ENCODE measurements at regions of chr12 and their contacts with region 1.

Region 1: DNA sequence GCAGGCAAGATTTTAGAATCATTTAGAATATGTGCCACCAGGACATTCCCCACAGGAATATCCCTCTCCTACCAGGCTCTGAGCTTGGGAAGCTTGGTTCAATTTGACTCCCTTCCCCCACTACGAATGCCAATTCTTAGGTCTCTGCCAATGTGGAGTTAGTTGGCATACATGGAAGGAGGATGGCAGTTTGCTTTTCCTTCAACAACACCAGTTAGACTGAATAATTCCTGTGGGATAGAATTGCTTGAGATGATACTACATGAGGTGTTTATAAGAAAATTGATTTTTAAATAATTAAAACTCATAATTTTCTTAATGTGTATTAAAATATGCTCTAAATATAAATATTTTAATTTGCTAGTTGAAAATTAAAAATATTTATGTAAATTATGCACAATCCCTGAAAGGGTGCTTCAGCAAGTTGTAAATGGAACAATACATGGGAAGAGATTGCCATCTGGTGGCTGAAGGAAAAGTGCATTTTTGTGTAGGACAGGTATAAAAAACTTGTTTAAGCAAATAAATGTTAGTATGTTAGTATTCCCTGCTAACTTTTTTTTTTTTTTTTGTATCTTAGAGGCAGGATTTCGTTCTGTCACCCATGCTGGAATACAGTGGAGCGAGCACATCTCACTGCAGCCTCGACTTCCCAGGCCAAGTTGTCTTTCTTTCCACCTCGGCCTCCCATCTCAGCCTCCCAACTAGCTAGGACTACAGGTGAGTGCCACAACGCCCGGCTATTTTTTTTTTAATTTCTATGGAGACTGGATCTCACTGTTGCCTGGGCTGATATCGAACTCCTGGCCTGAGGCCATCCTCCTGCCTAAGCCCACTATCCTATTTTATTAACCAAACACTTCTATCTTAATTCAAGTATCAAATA is 25.8 kb upstream of the STRAP start:
- DNase-seq: peak in 1 of 2 donors; percentile 15
- ATAC-seq: peak; percentile 45 to 64
- H3K4me3 ChIP-seq: no peak overlapping the region
- H3K27ac ChIP-seq: peak overlapping the region in 3 of 4 donors; percentile 8 to 19 (median 15)
- H3K4me1 ChIP-seq: peaks cover 0 to 2% of the 10 kb centered on the region in 2 donors
- H3K27me3 ChIP-seq: no peaks in the 10 kb centered on the region
- CTCF ChIP-seq: peak; percentile 78 to 86 (median 82)
- POLR2A ChIP-seq: no peak

Region 2: DNA sequence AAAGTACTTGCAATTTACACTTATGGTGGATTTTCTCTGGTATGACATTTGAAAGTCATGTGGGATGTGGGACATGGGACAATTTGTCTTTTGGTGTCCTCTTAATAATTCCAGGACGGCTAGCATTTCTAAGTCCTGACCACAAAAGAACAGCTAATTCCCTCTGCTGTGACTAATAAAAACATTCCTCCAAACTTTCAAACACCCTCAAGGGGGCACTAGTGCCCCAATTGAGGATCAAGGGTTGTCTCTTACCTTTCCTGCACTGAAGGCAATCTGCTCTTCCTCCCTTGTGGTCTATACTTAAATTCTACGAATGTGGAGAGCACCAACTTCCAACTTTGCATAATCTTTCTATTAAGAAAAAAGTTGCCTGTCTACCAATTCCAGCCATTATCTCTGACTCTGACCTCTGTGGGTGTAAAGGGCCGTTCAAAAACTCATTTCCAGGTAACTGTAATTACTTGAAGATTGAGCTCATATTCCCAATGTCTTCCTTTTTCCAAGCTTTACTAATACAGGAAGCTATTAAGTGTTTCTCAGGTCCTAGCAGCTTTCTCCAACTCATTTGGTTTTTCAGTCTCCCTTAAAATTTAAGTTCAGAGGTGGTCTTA is 323.9 kb before region 1 on chr12:
- in situ Hi-C with region 1: no loop called
- intact Hi-C with region 1: loop called (anchors 5 kb)
- DNase-seq: no peak
- ATAC-seq: peak; percentile 68 to 74
- H3K4me3 ChIP-seq: no peak overlapping the region
- H3K27ac ChIP-seq: no peak overlapping the region
- H3K4me1 ChIP-seq: no peaks in the 10 kb centered on the region
- H3K27me3 ChIP-seq: no peaks in the 10 kb centered on the region
- CTCF ChIP-seq: peak in 2 of 5 experiments; percentile 37 to 43
- POLR2A ChIP-seq: no peak

Region 3: GRCh38 chr12:15584366-15585041 is 271.8 kb before region 1 on chr12:
- in situ Hi-C with region 1: loop called in 1 of 4 experiments (anchors 5 kb)
- intact Hi-C with region 1: no loop called
- DNase-seq: no peak
- ATAC-seq: no peak
- H3K4me3 ChIP-seq: no peak overlapping the region
- H3K27ac ChIP-seq: no peak overlapping the region
- H3K4me1 ChIP-seq: no peaks in the 10 kb centered on the region
- H3K27me3 ChIP-seq: no peaks in the 10 kb centered on the region
- CTCF ChIP-seq: peak; percentile 30 to 60 (median 48)
- POLR2A ChIP-seq: no peak

Region 4: GRCh38 chr12:15590180-15590826 is 266.0 kb before region 1 on chr12:
- in situ Hi-C with region 1: loop called (anchors 5 kb)
- intact Hi-C with region 1: loop called (anchors 1 kb)
- DNase-seq: peak; percentile 8 to 31
- ATAC-seq: peak; percentile 94 to 95
- H3K4me3 ChIP-seq: peak overlapping the region; percentile 9 to 46 (median 32)
- H3K27ac ChIP-seq: peak overlapping the region in 2 of 4 donors; percentile 18 to 41
- H3K4me1 ChIP-seq: no peaks in the 10 kb centered on the region
- H3K27me3 ChIP-seq: no peaks in the 10 kb centered on the region
- CTCF ChIP-seq: peak; percentile 73 to 92 (median 83)
- POLR2A ChIP-seq: no peak

Region 5: DNA sequence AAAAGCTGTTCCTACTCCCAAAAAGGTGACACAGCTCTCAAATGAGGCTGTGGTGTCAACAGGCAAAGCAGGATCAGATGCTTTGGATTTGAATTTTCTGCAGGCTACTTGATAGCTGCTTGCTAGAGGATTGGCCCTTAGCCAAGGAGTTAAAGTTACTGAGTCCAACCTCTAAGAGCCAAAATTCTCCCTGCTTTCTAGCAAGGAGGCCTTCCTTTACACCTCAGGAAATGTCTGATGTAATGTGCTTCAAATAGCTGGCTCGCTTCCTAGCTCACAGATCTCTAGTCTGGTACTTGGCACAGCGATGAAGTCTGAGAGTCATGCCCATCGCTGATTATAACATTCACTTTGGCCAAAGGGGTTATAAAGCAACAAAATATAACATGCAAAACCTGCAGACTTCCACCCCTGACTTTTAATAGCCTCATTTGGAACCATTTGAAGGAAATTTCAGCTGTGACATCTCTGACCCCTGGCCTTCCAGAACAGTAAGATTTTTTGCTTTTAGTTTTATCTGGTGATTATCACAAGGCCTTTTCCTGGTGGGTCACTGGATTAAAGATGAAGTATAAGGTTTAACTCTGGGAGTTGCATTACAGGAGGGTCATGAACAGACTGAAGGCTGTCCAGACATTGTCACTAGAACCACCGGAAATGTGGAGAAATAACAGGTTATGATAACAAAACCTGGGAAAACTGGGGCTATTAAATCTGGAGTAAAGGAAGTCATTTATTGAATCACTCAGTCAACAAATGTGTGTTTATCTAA is 256.9 kb before region 1 on chr12:
- in situ Hi-C with region 1: loop called in 3 of 4 experiments (anchors 5 kb)
- intact Hi-C with region 1: no loop called
- DNase-seq: peak in 1 of 2 donors; percentile 24
- ATAC-seq: peak; percentile 84 to 90
- H3K4me3 ChIP-seq: no peak overlapping the region
- H3K27ac ChIP-seq: peak overlapping the region; percentile 15 to 42 (median 34)
- H3K4me1 ChIP-seq: peaks cover 4 to 11% of the 10 kb centered on the region in 2 donors
- H3K27me3 ChIP-seq: no peaks in the 10 kb centered on the region
- CTCF ChIP-seq: no peak
- POLR2A ChIP-seq: no peak

Region 6: DNA sequence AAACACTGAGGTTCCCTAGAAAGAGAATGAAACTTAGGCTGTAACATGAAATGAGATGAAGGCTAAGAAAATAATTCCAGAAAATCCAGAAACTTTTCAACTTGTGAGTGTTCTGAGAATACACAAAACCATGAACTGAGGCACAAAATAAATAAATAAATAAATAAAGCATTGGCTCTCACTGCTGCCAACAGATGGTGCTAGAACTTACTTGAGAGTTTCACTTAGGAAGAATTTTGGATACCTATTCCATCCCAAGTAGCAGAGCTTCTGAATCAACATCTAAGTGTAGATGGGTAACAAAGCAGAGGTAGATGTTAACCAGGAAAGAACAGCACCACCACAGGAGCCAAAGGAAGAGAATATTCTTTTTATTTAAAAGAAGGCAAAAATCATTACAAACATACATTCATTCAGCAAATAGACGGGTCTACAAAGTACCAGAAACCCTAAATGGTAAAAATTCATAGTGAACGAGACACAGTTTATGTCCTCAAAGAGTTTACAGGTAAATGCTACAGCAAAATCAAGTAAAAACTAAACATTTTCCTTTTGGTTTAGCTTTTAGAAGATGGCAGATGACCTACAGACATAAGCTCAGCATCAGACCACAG is 83.8 kb before region 1 on chr12:
- in situ Hi-C with region 1: no loop called
- intact Hi-C with region 1: loop called (anchors 5 kb)
- DNase-seq: no peak
- ATAC-seq: peak in 1 of 2 donors; percentile 41
- H3K4me3 ChIP-seq: no peak overlapping the region
- H3K27ac ChIP-seq: peak overlapping the region in 1 of 4 donors; percentile 3
- H3K4me1 ChIP-seq: peaks cover 0 to 7% of the 10 kb centered on the region in 2 donors
- H3K27me3 ChIP-seq: no peaks in the 10 kb centered on the region
- CTCF ChIP-seq: peak in 4 of 5 experiments; percentile 5 to 52 (median 32)
- POLR2A ChIP-seq: no peak

Region 7: GRCh38 chr12:15789220-15790171 is 66.8 kb before region 1 on chr12 and contains the start of gene EPS8:
- in situ Hi-C with region 1: no loop called
- intact Hi-C with region 1: loop called (anchors 5 kb)
- DNase-seq: peak; percentile 74 to 85
- ATAC-seq: peak; percentile 91 to 93
- H3K4me3 ChIP-seq: peak within 1 kb of the TSS; percentile 75 to 84 (median 82)
- H3K27ac ChIP-seq: peak within 1 kb of the TSS; percentile 84 to 91 (median 87)
- H3K4me1 ChIP-seq: peaks cover 0 to 5% of the 10 kb centered on the region in 2 donors
- H3K27me3 ChIP-seq: no peaks in the 10 kb centered on the region
- CTCF ChIP-seq: peak in 2 of 5 experiments; percentile 19 to 24
- POLR2A ChIP-seq: peak; percentile 76 to 87
- total RNA-seq, gene EPS8: 26.8 to 48.4 (median 32.0) TPM

Region 8: DNA sequence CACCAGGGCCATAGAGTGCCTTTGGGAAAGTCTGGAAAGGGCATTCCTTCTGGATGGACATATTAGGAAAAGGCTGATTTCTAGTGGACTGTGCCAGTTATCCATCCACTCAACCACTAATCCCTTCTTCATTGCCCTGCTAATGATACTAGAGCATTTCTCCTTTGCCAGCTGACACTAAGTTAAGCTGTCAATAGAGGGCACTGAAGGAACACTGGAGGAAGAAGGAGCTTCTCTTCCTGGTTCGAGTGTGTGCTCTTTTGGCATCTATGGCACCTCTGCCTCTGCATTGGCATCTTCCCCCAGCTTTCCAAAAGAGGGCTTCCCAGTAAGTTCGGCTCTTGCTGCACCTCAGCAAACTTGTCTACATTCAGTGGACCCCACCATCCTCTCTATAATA is 220.2 kb after region 1 on chr12:
- in situ Hi-C with region 1: no loop called
- intact Hi-C with region 1: no loop called
- DNase-seq: no peak
- ATAC-seq: no peak
- H3K4me3 ChIP-seq: no peak overlapping the region
- H3K27ac ChIP-seq: no peak overlapping the region
- H3K4me1 ChIP-seq: no peaks in the 10 kb centered on the region
- H3K27me3 ChIP-seq: no peaks in the 10 kb centered on the region
- CTCF ChIP-seq: no peak
- POLR2A ChIP-seq: no peak